Heart left ventricle (tissue), 16 donors: ENCODE measurements at regions of chr10 and their contacts with region 1.

Region 1: DNA sequence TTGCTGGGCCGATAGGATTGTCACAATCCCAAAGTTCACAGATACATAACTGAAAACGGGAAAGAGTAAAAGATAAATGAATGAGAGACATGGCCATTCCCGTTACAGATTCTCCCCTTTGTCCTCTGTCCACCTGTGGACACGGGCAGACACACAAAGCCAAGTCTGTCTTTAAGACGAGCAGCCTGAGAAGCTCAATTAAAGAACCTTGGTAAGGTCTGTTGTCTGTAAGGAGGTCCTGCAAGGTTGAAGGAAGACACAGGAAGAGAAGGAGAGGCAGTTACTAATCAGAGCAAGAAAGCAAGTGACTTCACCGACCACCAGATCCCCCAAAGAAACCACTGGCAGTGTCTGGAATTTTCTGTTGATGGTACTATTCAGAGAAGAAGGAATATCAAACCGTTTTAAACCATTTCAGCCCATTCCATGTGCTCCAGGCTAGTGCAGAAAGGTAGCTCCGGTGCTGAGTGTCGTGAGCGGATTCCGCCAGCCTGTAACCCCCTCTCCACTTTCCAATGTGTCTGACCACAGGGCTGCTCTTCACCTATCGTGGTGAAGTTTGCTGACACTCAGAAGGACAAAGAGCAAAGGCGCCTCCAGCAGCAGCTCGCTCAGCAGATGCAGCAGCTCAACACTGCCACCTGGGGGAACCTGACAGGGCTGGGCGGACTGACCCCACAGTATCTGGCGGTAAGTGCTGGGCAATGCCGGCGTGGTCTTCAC is 252.6 kb downstream of the CELF2 start:
- DNase-seq: peak; percentile 83 to 89 (median 85)
- ATAC-seq: peak; percentile 94 to 98 (median 96)
- H3K4me3 ChIP-seq: no peak overlapping the region
- H3K27ac ChIP-seq: peak overlapping the region in 8 of 12 donors; percentile 16 to 53 (median 34)
- H3K4me1 ChIP-seq: peaks cover 0 to 40% (median 15%) of the 10 kb centered on the region in 12 donors
- H3K27me3 ChIP-seq: no peaks in the 10 kb centered on the region
- CTCF ChIP-seq: peak; percentile 83 to 97 (median 92)
- POLR2A ChIP-seq: no peak

Region 2: GRCh38 chr10:9331583-9332008 is 1938.7 kb before region 1 on chr10:
- intact Hi-C with region 1: loop called in 1 of 10 experiments (anchors 10 kb)
- DNase-seq: no peak
- ATAC-seq: peak in 3 of 4 donors; percentile 47 to 57 (median 49)
- H3K4me3 ChIP-seq: no peak overlapping the region
- H3K27ac ChIP-seq: no peak overlapping the region
- H3K4me1 ChIP-seq: no peaks in the 10 kb centered on the region
- H3K27me3 ChIP-seq: peaks cover 0 to 8% (median 0%) of the 10 kb centered on the region in 9 donors
- CTCF ChIP-seq: peak; percentile 71 to 88 (median 83)
- POLR2A ChIP-seq: no peak

Region 3: DNA sequence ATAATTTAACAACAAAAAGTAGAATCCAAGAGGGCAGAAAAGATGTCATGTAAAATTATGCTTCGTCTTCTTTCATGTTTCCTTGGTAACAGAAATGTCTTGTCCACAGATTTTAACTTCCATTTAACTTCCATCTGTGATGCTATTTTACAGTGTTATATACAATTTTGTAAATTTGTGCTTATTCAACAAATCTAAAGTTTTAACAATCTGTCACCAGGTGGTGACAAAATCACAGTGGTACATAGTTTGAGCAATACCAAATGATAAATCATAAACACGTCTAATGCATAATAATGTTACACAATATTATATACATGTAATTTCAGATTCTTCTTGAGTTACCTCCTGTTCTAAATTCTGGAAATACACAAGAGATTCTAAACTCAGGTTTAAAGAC is 1037.1 kb before region 1 on chr10:
- intact Hi-C with region 1: loop called in 4 of 10 experiments (anchors 10 kb)
- DNase-seq: no peak
- ATAC-seq: no peak
- H3K4me3 ChIP-seq: no peak overlapping the region
- H3K27ac ChIP-seq: no peak overlapping the region
- H3K4me1 ChIP-seq: no peaks in the 10 kb centered on the region
- H3K27me3 ChIP-seq: no peaks in the 10 kb centered on the region
- CTCF ChIP-seq: peak in 10 of 12 donors; percentile 7 to 56 (median 28)
- POLR2A ChIP-seq: no peak

Region 4: GRCh38 chr10:10792681-10793080 is 477.6 kb before region 1 on chr10:
- intact Hi-C with region 1: loop called in 2 of 10 experiments (anchors 10 kb)
- DNase-seq: no peak
- ATAC-seq: peak; percentile 27 to 78 (median 42)
- H3K4me3 ChIP-seq: peak overlapping the region in 1 of 12 donors; percentile 25
- H3K27ac ChIP-seq: peak overlapping the region in 7 of 12 donors; percentile 4 to 73 (median 27)
- H3K4me1 ChIP-seq: peaks cover 0 to 46% (median 34%) of the 10 kb centered on the region in 12 donors
- H3K27me3 ChIP-seq: no peaks in the 10 kb centered on the region
- CTCF ChIP-seq: no peak
- POLR2A ChIP-seq: no peak

Region 5: DNA sequence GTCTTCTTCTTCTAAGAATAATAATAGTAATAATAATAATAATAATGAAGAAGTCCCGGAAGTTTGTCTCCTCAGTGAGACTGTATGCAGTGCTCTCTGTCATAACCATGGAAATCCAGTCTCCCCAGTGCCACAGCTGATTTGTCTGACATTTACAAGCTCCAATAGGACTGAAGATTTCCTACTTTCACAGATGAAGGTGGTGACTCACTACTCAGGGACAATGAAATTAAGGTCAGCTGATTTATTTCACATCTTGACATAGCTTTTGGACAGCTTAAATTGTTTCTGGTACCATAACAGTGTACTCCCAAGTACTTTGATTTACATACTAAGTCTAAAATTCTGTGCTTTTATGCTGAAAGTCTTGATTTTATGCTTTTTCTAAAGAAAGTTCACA is 245.7 kb before region 1 on chr10:
- intact Hi-C with region 1: loop called in 8 of 10 experiments (anchors 5 to 10 kb)
- DNase-seq: no peak
- ATAC-seq: peak in 3 of 4 donors; percentile 57 to 86 (median 83)
- H3K4me3 ChIP-seq: no peak overlapping the region
- H3K27ac ChIP-seq: peak overlapping the region in 5 of 12 donors; percentile 4 to 61 (median 13)
- H3K4me1 ChIP-seq: peaks cover 0 to 77% (median 26%) of the 10 kb centered on the region in 12 donors
- H3K27me3 ChIP-seq: peaks cover 0 to 11% (median 0%) of the 10 kb centered on the region in 9 donors
- CTCF ChIP-seq: no peak
- POLR2A ChIP-seq: no peak

Region 6: GRCh38 chr10:11045995-11046775 is 224.1 kb before region 1 on chr10:
- intact Hi-C with region 1: loop called in 5 of 10 experiments (anchors 10 kb)
- DNase-seq: peak; percentile 63 to 87 (median 81)
- ATAC-seq: peak; percentile 68 to 82 (median 78)
- H3K4me3 ChIP-seq: peak overlapping the region in 8 of 12 donors; percentile 8 to 41 (median 26)
- H3K27ac ChIP-seq: peak overlapping the region; percentile 55 to 87 (median 79)
- H3K4me1 ChIP-seq: peaks cover 0 to 92% (median 64%) of the 10 kb centered on the region in 12 donors
- H3K27me3 ChIP-seq: no peaks in the 10 kb centered on the region
- CTCF ChIP-seq: no peak
- POLR2A ChIP-seq: no peak

Region 7: DNA sequence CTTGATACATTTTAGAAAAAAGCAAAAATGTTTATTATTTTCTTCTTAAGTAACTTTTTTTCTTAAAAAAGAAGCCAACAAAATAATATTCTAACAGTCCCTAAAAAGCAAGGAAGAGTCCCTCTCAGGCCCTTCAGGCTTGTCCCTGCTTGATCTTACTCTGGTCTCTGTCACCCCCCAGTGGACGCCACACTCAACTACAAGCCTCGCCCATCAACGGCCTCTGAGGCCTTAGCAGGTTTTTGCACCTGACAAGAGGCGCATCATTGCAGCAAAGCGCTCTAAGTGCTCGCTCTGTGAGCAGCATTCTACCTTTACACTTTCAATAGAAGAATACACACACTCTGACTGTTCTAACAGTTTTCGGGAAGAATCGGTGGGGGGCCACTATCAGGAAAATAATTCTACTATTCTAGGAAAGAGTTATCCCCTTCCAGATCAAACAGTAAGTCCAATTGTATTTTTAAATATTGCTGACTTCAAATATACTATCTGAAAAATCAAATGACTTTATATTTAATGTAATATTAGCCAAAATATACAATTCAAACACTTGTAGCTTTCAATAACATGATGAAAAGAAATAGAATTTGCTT is 202.0 kb after region 1 on chr10:
- intact Hi-C with region 1: loop called in 3 of 10 experiments (anchors 10 kb)
- DNase-seq: peak; percentile 45 to 78 (median 46)
- ATAC-seq: peak; percentile 47 to 93 (median 90)
- H3K4me3 ChIP-seq: no peak overlapping the region
- H3K27ac ChIP-seq: no peak overlapping the region
- H3K4me1 ChIP-seq: peaks cover 0 to 4% (median 0%) of the 10 kb centered on the region in 12 donors
- H3K27me3 ChIP-seq: no peaks in the 10 kb centered on the region
- CTCF ChIP-seq: peak; percentile 78 to 92 (median 86)
- POLR2A ChIP-seq: no peak

Region 8: GRCh38 chr10:12333380-12334185 is 1063.3 kb after region 1 on chr10:
- intact Hi-C with region 1: no loop called
- DNase-seq: peak; percentile 26 to 78 (median 71)
- ATAC-seq: peak; percentile 40 to 94 (median 91)
- H3K4me3 ChIP-seq: peak overlapping the region in 2 of 12 donors; percentile 7 to 19
- H3K27ac ChIP-seq: peak overlapping the region in 9 of 12 donors; percentile 19 to 71 (median 56)
- H3K4me1 ChIP-seq: peaks cover 0 to 19% (median 11%) of the 10 kb centered on the region in 12 donors
- H3K27me3 ChIP-seq: no peaks in the 10 kb centered on the region
- CTCF ChIP-seq: no peak
- POLR2A ChIP-seq: no peak